ENCODE measurements at regions of chr12 and their contacts with region 1.

Region 1: GRCh38 chr12:133037207-133038005 is at the start of gene ZNF84:
- DNase-seq: peak; percentile 87 to 97
- H3K4me3 ChIP-seq: peak within 1 kb of the TSS; percentile 83 to 99
- H3K27ac ChIP-seq: peak within 1 kb of the TSS; percentile 95 to 98
- H3K4me1 ChIP-seq: peaks cover 0 to 3% of the 10 kb centered on the region in 2 donors
- H3K27me3 ChIP-seq: no peaks in the 10 kb centered on the region
- CTCF ChIP-seq: no peak
- total RNA-seq, gene ZNF84: 2.7 TPM

Region 2: DNA sequence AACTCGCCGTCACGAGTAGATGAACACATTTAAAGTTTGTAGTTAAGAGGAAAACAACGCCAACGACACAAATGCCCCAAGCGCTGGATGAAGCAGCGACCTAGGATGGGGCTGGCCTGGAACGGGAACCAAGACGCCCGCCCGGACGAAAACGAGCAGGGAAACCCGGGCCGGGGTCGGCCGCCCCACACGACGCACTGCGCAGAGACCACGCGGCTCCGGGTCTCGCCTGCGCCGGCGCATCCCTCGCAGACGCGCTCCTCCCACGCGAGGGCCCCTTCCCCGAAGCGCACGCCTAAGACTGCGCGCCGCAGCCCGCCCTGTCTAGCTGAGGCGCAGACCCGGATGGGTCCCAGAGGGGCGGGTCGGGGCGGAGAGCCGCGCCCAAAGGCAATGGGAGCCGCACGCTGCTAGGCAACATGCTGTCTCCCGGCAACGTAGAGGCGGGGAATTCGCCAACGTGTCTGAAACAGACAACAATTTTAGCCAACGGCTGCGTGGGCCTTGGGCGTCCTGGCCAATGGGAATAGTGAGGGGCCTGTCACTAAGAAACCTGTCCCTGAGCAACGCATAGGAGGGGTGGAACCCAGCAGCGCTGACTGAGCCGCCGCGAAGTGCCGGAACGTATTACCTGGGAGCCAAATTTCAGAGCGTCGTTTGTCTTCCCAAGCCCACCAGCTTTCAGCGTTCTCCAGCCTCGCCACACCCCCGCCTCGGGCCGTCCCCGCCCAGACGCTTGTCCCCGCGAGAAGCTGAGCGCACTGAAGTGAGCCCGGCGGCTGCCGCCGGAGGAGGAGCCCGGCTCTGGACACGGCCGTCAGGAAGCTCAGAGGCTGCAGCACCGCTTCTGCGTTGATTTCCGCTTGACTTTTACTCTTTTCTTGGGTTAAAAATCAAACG is 129.0 kb before region 1 on chr12:
- intact Hi-C with region 1: loop called (anchors 1 kb)
- DNase-seq: peak; percentile 83 to 96
- H3K4me3 ChIP-seq: peak overlapping the region; percentile 79 to 86
- H3K27ac ChIP-seq: peak overlapping the region; percentile 83 to 85
- H3K4me1 ChIP-seq: peaks cover 0 to 6% of the 10 kb centered on the region in 2 donors
- H3K27me3 ChIP-seq: no peaks in the 10 kb centered on the region
- CTCF ChIP-seq: no peak

Region 3: DNA sequence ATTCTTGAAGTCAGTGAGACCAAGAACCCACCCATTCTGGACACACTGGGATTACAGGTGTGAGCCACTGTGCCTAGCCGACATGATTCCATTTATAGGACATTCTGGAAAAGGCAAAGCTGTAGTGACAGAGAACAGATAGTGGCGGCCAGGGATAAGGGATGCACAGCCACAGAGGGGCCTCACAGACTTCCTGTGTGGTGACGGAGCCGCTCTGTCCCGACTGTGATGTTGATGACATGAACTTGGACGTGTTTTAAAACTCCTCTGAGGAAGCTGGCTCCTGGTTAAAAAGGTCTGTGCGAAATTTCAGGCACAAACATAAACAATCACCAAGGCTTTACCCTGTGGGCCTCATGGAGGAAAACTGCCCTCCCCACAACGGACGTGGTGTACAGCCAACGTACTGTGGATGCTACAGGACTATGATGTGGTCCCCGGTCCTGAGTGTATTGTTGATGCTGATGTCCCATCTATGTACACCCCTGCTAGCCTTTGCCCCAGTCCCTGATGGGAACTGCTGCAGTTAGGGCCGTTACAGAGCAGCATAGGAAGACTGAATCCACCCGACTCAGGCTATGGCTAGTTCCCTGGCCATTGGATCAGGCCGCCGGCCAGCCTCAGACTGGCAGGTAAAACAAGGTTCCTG is 97.2 kb before region 1 on chr12:
- intact Hi-C with region 1: no loop called
- DNase-seq: no peak
- H3K4me3 ChIP-seq: no peak overlapping the region
- H3K27ac ChIP-seq: no peak overlapping the region
- H3K4me1 ChIP-seq: no peaks in the 10 kb centered on the region
- H3K27me3 ChIP-seq: no peaks in the 10 kb centered on the region
- CTCF ChIP-seq: no peak

Region 4: DNA sequence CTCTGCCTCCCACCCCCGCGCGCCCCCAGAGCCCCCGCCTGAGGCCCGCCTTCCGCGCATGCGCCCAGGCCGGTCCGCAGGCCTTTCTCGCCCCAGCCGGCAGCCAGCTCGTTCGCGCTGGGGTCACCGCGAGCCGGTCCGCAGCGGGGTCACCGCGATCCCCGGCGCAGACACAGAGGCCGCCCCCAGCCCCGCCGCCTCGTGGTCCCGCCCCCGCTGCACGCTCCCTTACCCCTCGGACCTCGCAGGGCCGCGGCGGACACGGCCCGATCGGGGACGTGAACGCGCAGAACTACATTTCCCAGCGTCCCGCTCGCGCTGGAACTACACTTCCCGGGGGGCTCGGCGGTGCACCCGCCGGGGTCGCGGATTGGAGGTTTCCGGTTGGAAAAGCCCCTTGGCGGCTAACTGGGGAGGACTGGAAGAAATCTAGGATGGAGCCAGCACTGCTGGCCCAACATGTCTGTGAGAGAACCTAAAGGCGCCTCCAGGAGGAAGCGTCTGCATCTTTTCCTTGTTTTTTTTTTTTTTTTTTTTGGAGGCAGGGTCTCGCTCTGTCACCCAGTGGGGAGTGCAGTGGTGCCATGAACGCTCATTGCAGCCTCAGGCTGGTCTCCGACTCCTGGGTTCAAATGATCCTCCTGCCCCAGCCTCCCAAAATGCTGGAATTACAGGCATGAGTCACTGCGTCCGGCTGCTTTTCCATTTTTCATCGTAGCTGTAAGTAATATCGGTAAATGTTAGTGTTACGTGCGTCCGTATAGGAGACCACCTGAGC is 81.2 kb before region 1 on chr12 and contains the start of gene ZNF605:
- intact Hi-C with region 1: loop called (anchors 1 kb)
- DNase-seq: peak; percentile 41 to 91
- H3K4me3 ChIP-seq: peak within 1 kb of the TSS; percentile 80 to 98
- H3K27ac ChIP-seq: peak within 1 kb of the TSS; percentile 89 to 92
- H3K4me1 ChIP-seq: peaks cover 0 to 2% of the 10 kb centered on the region in 2 donors
- H3K27me3 ChIP-seq: no peaks in the 10 kb centered on the region
- CTCF ChIP-seq: no peak
- total RNA-seq, gene ZNF605: 1.3 TPM

Region 5: GRCh38 chr12:133010657-133011297 is 26.6 kb before region 1 on chr12:
- intact Hi-C with region 1: no loop called
- DNase-seq: no peak
- H3K4me3 ChIP-seq: peak overlapping the region in 1 of 2 donors; percentile 23
- H3K27ac ChIP-seq: no peak overlapping the region
- H3K4me1 ChIP-seq: no peaks in the 10 kb centered on the region
- H3K27me3 ChIP-seq: no peaks in the 10 kb centered on the region
- CTCF ChIP-seq: no peak

Region 6: GRCh38 chr12:133130038-133130807 is 92.8 kb after region 1 on chr12 and contains the starts of genes ZNF10 and ZNF891:
- intact Hi-C with region 1: loop called (anchors 1 kb)
- DNase-seq: peak; percentile 78 to 97
- H3K4me3 ChIP-seq: peak within 1 kb of the TSS; percentile 90 to 94
- H3K27ac ChIP-seq: peak within 1 kb of the TSS; percentile 89 to 93
- H3K4me1 ChIP-seq: peaks cover 0 to 7% of the 10 kb centered on the region in 2 donors
- H3K27me3 ChIP-seq: no peaks in the 10 kb centered on the region
- CTCF ChIP-seq: peak in 1 of 3 experiments; percentile 3
- total RNA-seq, gene ZNF10: 3.8 TPM
- total RNA-seq, gene ZNF891: 2.0 TPM

Measured in ascending aorta (tissue), 2 donors.